ENCODE measurements at regions of chr14 and their contacts with region 1.

Region 1: GRCh38 chr14:64636208-64636979 is 67.8 kb upstream of the PLEKHG3 start:
- DNase-seq: no peak
- ATAC-seq: peak; percentile 89
- H3K4me3 ChIP-seq: no peak overlapping the region
- H3K27ac ChIP-seq: no peak overlapping the region
- H3K4me1 ChIP-seq: no peaks in the 10 kb centered on the region; the same call in 1 of the 2 replicates
- H3K27me3 ChIP-seq: no peaks in the 10 kb centered on the region
- CTCF ChIP-seq: peak; percentile 81 to 84 (median 81)
- EP300 ChIP-seq: no peak
- POLR2A ChIP-seq: no peak
- RAD21 ChIP-seq: peak; percentile 65

Region 2: GRCh38 chr14:64349741-64350490 is 286.5 kb before region 1 on chr14:
- CTCF ChIA-PET with region 1: interaction called, 69 read pairs
- POLR2A ChIA-PET with region 1: no interaction called
- RAD21 ChIA-PET with region 1: interaction called, 7 read pairs
- SMC1A ChIA-PET with region 1: interaction called, 3 read pairs
- in situ Hi-C with region 1: no loop called
- intact Hi-C with region 1: loop called (anchors 2 kb)
- DNase-seq: no peak
- ATAC-seq: no peak
- H3K4me3 ChIP-seq: no peak overlapping the region
- H3K27ac ChIP-seq: no peak overlapping the region
- H3K4me1 ChIP-seq: no peaks in the 10 kb centered on the region
- H3K27me3 ChIP-seq: no peaks in the 10 kb centered on the region
- CTCF ChIP-seq: no peak
- EP300 ChIP-seq: no peak
- POLR2A ChIP-seq: no peak
- RAD21 ChIP-seq: no peak

Region 3: GRCh38 chr14:64503478-64504309 is 132.7 kb before region 1 on chr14 and contains the start of gene ZBTB25:
- CTCF ChIA-PET with region 1: interaction called, 21 read pairs
- POLR2A ChIA-PET with region 1: interaction called, 3 read pairs
- RAD21 ChIA-PET with region 1: interaction called, 9 read pairs
- SMC1A ChIA-PET with region 1: interaction called, 3 read pairs
- in situ Hi-C with region 1: no loop called
- intact Hi-C with region 1: loop called (anchors 5 kb)
- DNase-seq: peak; percentile 83
- ATAC-seq: peak; percentile 71
- H3K4me3 ChIP-seq: peak within 1 kb of the TSS; percentile 91
- H3K27ac ChIP-seq: peak within 1 kb of the TSS; percentile 98
- H3K4me1 ChIP-seq: peaks cover 6% of the 10 kb centered on the region
- H3K27me3 ChIP-seq: no peaks in the 10 kb centered on the region
- CTCF ChIP-seq: no peak
- EP300 ChIP-seq: peak; percentile 82 to 86
- POLR2A ChIP-seq: peak; percentile 85
- RAD21 ChIP-seq: no peak
- polyA plus RNA-seq, gene ZBTB25: 4.1 to 5.6 TPM

Region 4: DNA sequence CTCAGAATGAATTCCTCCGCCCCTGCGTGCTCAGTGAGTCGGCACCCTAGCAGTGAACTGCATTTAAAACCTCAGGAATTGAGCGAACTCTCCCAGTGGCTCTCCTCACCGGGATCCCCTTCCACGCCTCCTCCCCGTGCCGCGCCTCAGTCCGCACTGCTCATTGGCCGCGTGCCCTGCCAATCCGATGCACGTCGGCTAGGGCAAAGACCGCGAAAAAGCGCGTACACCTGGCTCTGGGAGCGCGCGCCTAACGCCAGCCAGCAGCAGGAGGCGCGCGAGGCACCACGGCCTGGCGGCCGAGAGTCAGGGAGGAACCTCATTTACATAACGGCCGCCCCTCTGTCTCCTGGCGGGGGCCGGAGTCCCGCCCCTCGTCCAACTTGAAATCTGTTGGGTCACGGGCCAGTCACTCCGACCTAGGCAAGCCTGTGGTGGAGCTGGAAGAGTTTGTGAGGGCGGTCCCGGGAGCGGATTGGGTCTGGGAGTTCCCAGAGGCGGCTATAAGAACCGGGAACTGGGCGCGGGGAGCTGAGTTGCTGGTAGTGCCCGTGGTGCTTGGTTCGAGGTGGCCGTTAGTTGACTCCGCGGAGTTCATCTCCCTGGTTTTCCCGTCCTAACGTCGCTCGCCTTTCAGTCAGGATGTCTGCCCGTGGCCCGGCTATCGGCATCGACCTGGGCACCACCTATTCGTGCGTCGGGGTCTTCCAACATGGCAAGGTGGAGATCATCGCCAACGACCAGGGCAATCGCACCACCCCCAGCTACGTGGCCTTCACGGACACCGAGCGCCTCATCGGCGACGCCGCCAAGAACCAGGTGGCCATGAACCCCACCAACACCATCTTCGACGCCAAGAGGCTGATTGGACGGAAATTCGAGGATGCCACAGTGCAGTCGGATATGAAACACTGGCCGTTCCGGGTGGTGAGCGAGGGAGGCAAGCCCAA is 95.9 kb before region 1 on chr14 and contains the start of gene HSPA2:
- CTCF ChIA-PET with region 1: interaction called, 12 read pairs
- POLR2A ChIA-PET with region 1: no interaction called
- RAD21 ChIA-PET with region 1: interaction called, 3 read pairs
- SMC1A ChIA-PET with region 1: interaction called, 6 read pairs
- in situ Hi-C with region 1: no loop called
- intact Hi-C with region 1: loop called (anchors 5 kb)
- DNase-seq: peak; percentile 89
- ATAC-seq: peak; percentile 98
- H3K4me3 ChIP-seq: peak within 1 kb of the TSS; percentile 85
- H3K27ac ChIP-seq: peak within 1 kb of the TSS; percentile 8; the same call in 1 of the 2 replicates
- H3K4me1 ChIP-seq: peaks cover 4% of the 10 kb centered on the region; the same call in 1 of the 2 replicates
- H3K27me3 ChIP-seq: peaks cover 6 to 9% of the 10 kb centered on the region in 2 experiments
- CTCF ChIP-seq: peak; percentile 69 to 84 (median 77)
- EP300 ChIP-seq: no peak
- POLR2A ChIP-seq: peak; percentile 90
- RAD21 ChIP-seq: 0 out of 2 replicates have a peak, but pooled peaks have one; percentile 32
- polyA plus RNA-seq, gene HSPA2: 0.02 to 0.03 TPM

Region 5: DNA sequence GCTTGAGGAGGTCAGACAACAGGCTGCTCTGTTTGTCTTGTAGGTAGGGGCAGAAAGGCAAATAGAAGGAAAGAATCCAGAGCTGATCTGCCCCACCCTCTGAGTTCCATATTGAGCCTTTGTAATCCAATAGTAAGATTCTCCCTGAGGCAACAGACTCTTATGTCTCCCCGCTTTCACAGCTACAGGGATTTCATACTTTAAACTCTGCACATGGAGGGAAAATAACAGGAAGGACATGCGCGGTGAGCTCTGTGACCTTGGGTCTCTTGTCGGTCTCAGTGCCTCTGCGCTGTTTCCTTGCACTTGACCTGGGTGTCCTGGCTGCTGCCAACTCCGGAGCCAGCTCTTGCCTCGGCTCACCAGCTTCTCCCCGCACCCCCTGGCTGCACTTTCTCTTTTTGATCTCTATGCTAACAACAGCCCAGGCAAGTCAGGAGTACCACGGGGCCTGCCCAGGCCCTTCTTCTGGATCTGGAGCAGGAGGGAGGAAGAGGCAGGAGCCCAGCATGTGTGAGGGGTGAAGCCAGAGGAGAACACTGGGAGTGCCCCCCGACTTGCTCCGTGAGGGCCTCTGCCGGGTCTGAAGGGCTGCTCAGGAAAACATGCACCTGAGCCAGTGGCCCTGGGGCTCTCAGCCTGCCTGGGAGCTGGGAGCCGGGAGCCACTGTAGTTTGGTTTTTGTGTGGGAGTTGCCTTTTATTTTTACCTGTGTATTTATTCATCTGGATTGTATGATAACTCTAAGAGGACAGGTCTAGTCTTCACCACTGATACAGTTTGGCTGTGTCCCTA is 10.7 kb before region 1 on chr14:
- CTCF ChIA-PET with region 1: interaction called, 14 read pairs
- POLR2A ChIA-PET with region 1: no interaction called
- RAD21 ChIA-PET with region 1: no interaction called
- SMC1A ChIA-PET with region 1: interaction called, 11 read pairs
- in situ Hi-C with region 1: no loop called
- intact Hi-C with region 1: no loop called
- DNase-seq: no peak
- ATAC-seq: no peak
- H3K4me3 ChIP-seq: no peak overlapping the region
- H3K27ac ChIP-seq: no peak overlapping the region
- H3K4me1 ChIP-seq: no peaks in the 10 kb centered on the region
- H3K27me3 ChIP-seq: no peaks in the 10 kb centered on the region
- CTCF ChIP-seq: no peak
- EP300 ChIP-seq: no peak
- POLR2A ChIP-seq: no peak
- RAD21 ChIP-seq: no peak

Region 6: GRCh38 chr14:64698903-64699302 is 62.5 kb after region 1 on chr14:
- CTCF ChIA-PET with region 1: no interaction called
- POLR2A ChIA-PET with region 1: no interaction called
- RAD21 ChIA-PET with region 1: no interaction called
- SMC1A ChIA-PET with region 1: no interaction called
- in situ Hi-C with region 1: no loop called
- intact Hi-C with region 1: no loop called
- DNase-seq: no peak
- ATAC-seq: peak; percentile 53
- H3K4me3 ChIP-seq: no peak overlapping the region
- H3K27ac ChIP-seq: no peak overlapping the region
- H3K4me1 ChIP-seq: no peaks in the 10 kb centered on the region
- H3K27me3 ChIP-seq: peaks cover 5 to 19% of the 10 kb centered on the region in 2 experiments; a peak in 3 of 4 replicates
- CTCF ChIP-seq: no peak
- EP300 ChIP-seq: no peak
- POLR2A ChIP-seq: no peak
- RAD21 ChIP-seq: no peak

Measured in GM12878 (cell line).